ENCODE measurements at regions of chr14 and their contacts with region 1.

Region 1: DNA sequence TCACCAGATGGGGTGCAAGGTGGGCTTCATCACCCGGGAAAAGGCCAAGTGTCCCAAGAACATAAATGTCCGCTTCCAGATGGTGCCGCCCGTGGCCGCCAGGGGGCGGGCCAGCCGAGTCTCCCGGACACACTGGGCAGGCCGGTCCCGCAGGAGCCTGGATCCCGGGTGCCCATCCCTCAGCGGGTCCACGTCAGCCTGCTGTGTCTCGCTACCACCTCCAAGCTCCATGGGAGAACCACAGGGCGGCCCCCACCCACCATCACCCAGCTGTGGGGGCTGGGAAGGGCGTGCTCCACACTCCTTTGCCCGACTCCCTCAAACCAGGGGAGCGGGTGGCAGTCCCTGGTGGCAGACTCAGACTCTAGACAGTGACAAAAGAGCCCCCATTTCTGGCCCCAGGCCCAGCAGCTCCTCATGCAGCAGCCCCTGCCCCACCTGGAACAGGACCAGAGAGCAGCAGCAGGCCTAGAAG is 22.0 kb upstream of the NUDT14 start:
- DNase-seq: peak; percentile 61 to 79
- ATAC-seq: peak; percentile 61

Region 2: DNA sequence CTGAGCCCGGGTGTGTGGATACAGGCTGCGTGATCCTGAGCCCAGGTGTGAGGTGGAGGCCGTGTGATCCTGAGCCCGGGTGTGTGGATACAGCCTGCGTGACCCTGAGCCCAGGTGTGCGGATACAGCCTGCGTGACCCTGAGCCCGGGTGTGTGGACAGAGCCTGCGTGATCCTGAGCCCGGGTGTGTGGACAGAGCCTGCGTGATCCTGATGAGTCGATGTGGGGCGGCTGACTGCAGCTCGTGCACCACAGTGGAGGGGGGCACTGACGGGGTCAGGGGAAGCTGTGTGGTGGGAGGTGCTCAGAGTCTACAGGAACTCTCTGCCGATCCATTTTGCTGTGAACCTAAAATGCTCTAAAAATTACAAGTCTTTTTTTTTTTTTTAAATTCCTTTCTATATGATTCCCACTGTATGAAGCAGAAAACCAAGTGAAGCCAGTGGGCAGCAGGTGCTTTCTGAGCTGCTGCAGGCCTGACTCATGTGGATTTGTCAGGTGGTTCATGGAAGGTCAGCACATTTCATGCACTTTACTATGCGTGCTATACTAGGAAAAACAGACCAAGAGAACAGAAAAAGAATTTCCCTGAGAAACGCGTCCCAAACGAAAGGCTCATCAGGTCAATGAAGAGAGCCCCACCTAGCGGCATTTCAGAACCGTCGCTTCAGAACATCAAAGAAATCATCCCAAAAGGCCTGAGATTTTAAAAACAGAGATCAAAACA is 78.4 kb after region 1 on chr14:
- intact Hi-C with region 1: loop called in 1 of 2 experiments (anchors 10 kb)
- DNase-seq: no peak
- ATAC-seq: peak; percentile 51

Region 3: DNA sequence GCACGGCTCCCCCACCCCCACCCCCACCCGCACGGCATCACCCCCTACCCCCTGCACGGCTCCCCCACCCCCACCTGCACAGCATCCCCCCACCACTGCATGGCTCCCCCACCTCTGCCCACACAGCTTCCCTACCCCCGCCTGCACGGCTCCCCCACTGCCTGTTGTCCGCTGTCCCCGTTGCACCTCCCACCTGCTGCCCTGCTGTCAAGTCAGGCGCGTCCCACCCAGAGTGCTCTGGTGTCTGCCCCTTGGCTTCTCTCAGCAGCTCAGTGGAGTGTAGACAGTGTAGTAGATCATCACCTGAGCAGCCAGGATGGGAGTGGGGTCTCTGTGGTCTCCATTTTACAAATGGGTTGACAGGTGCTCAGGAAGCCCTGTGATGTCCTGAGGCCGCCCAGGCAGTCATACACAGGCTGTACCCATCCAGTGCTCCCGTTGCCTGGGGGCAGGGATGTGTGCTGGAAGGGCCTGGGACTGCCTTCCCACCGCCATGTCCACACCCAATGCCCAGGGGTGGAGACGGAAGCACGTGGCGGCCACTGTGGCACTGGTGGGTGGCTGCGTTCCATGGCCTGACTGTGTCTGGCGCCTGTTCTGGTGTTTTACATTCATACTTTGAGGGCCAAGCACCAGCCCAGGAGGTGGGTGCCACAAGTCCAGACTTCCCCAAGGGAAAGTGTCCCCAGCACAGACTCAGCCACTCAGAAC is 143.9 kb after region 1 on chr14:
- intact Hi-C with region 1: loop called in 1 of 2 experiments (anchors 5 kb)
- DNase-seq: no peak
- ATAC-seq: no peak

Region 4: DNA sequence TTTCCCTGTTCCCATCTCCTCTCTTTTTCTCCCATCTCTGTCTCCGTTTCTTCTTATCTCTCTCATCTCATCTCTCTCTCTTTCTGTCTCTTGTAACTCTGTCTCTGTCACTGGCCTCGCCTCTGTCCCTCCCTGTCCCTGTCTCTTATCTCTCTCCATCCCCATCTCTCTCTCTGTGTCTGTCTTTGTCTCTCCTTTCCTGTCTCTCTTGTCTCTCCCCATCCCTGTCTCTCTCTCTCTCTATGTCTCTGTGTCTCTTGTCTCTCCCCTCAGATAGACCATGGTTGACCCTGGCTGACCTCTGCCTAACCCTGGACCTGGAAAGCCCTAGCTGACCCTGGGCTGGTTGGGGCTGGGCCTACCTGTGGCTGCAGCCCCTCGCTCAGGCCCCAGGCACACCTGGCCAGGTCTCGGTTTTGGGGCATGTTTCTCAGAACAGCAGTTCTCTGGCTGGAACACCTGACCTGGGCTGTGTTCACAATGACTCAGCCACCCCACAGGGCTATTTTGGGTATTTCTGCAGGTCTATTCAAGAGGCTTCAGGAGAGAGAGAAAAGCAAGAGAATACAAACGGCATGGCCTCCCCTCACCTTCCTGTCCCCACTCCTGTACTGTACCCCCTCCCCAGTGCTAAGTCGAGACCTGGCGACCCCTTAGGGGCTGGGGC is 497.7 kb after region 1 on chr14:
- intact Hi-C with region 1: no loop called
- DNase-seq: no peak
- ATAC-seq: no peak

Measured in left colon (tissue), 2 donors.